Calu3 (cell line): ENCODE measurements at regions of chr17 and their contacts with region 1.

Region 1: GRCh38 chr17:61412143-61412859 is 12.7 kb downstream of the TBX2 start:
- DNase-seq: peak; percentile 78
- H3K4me3 Mint-ChIP-seq: peak overlapping the region; percentile 69
- H3K27ac Mint-ChIP-seq: no peak overlapping the region
- H3K4me1 Mint-ChIP-seq: no peaks in the 10 kb centered on the region
- H3K27me3 Mint-ChIP-seq: no peaks in the 10 kb centered on the region
- CTCF ChIP-seq: peak; percentile 89

Region 2: DNA sequence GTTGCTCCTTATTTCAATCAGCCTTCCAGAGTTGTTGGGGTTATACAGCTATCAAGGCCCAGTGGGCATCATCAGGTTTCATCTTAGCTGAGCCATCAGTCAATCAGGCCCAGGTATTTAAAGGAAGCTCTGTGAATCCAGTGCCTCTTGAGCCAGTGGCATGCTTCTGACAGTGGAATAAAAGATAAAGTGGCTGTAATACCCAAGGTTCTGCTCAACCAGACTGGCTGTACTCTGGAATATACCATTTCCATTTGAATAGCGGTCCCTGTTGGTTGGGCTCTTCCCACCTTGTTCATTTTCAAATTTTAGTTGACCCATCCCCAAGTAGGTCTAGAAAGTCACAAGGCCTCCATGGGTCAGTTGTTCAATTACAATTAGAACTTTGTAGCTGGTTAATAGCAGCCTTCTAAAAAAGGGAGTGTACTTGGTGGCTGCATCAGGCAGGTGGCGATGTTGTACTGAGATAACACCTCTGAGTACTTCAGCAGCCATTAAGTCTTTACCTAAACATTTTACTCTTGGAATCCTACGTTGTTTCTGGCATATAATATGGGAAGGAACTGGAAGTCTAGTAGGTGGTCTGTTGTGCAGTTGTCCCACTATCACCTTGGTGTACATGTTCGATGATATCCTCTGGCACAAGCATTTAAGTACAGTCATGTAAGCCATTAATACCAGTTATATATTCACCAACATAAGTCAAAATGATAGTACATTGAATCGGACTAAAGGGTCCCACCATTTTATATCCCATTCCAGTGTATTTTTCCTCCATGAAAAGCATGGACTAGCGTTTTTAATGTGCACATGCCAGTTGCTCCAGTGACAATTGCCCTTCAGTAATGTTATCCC is 440.6 kb before region 1 on chr17:
- CTCF ChIA-PET with region 1: interaction called, 3 read pairs
- intact Hi-C with region 1: loop called (anchors 5 kb)
- DNase-seq: peak; percentile 45
- H3K4me3 Mint-ChIP-seq: no peak overlapping the region
- H3K27ac Mint-ChIP-seq: no peak overlapping the region
- H3K4me1 Mint-ChIP-seq: no peaks in the 10 kb centered on the region
- H3K27me3 Mint-ChIP-seq: no peaks in the 10 kb centered on the region
- CTCF ChIP-seq: peak; percentile 36

Region 3: GRCh38 chr17:61366715-61367413 is 45.4 kb before region 1 on chr17:
- CTCF ChIA-PET with region 1: no interaction called
- intact Hi-C with region 1: no loop called
- DNase-seq: no peak
- H3K4me3 Mint-ChIP-seq: no peak overlapping the region
- H3K27ac Mint-ChIP-seq: no peak overlapping the region
- H3K4me1 Mint-ChIP-seq: no peaks in the 10 kb centered on the region
- H3K27me3 Mint-ChIP-seq: no peaks in the 10 kb centered on the region
- CTCF ChIP-seq: no peak

Region 4: DNA sequence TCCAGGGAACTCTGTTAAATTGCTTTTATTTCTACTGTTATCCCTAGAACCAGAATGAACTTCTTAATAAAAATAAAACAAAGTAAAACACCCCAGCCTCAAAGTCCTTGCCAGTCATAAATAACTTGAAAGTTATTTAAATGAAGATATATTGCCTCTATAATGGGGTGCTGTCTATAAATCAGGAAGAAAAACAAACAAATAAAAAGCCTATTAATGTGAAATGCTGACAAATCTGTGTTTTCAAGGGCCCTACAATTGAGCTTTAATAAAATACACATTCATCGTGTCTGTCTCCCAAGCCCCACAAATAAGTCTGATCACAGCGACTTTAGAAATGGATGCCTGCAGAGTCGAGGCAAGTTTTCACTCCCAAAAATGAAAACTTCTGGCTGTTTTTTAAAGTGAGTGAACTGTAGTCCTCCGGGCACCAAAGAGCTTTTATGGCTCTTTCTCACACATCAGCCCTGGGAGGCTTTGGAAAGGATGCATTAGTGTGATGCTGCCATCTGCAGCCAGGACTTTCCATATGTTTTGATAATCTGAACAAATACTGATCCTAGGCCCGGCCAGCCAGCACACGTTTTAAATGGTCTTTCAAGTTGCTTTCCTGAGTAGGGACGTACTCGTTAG is 162.4 kb after region 1 on chr17:
- CTCF ChIA-PET with region 1: interaction called, 7 read pairs
- intact Hi-C with region 1: loop called (anchors 2 kb)
- DNase-seq: peak; percentile 29
- H3K4me3 Mint-ChIP-seq: no peak overlapping the region
- H3K27ac Mint-ChIP-seq: no peak overlapping the region
- H3K4me1 Mint-ChIP-seq: peaks cover 8% of the 10 kb centered on the region
- H3K27me3 Mint-ChIP-seq: no peaks in the 10 kb centered on the region
- CTCF ChIP-seq: no peak

Region 5: DNA sequence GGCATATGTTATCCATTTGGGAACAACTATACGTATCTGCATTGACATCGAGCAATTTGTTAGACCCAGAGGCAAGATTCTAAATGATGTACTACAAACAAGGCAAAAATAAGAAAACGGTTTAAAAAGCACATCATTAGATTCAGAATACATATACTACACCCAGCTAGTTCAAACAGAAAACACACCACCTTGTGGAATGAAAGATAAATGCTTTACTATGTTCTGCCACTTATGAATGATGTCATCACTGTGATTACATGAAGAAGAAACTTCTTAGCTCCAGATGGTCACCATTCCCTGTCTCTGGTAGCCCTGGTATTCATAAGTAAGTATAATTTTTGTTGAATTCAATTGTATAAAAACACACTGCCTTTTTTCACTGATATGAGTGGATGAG is 170.9 kb after region 1 on chr17:
- CTCF ChIA-PET with region 1: interaction called, 13 read pairs
- intact Hi-C with region 1: loop called (anchors 2 kb)
- DNase-seq: no peak
- H3K4me3 Mint-ChIP-seq: no peak overlapping the region
- H3K27ac Mint-ChIP-seq: no peak overlapping the region
- H3K4me1 Mint-ChIP-seq: peaks cover 20% of the 10 kb centered on the region
- H3K27me3 Mint-ChIP-seq: no peaks in the 10 kb centered on the region
- CTCF ChIP-seq: no peak